T-cell (primary cell): ENCODE measurements at regions of chr17 and their contacts with region 1.

Region 1: GRCh38 chr17:53516636-53517035 is 306.1 kb upstream of the KIF2B start:
- DNase-seq: no peak
- ATAC-seq: no peak
- H3K4me3 ChIP-seq: no peak overlapping the region
- H3K4me3 Mint-ChIP-seq: no peak overlapping the region
- H3K27ac ChIP-seq: no peak overlapping the region
- H3K27ac Mint-ChIP-seq: no peak overlapping the region
- H3K4me1 ChIP-seq: no peaks in the 10 kb centered on the region
- H3K4me1 Mint-ChIP-seq: no peaks in the 10 kb centered on the region
- H3K27me3 ChIP-seq: no peaks in the 10 kb centered on the region
- H3K27me3 Mint-ChIP-seq: no peaks in the 10 kb centered on the region

Region 2: DNA sequence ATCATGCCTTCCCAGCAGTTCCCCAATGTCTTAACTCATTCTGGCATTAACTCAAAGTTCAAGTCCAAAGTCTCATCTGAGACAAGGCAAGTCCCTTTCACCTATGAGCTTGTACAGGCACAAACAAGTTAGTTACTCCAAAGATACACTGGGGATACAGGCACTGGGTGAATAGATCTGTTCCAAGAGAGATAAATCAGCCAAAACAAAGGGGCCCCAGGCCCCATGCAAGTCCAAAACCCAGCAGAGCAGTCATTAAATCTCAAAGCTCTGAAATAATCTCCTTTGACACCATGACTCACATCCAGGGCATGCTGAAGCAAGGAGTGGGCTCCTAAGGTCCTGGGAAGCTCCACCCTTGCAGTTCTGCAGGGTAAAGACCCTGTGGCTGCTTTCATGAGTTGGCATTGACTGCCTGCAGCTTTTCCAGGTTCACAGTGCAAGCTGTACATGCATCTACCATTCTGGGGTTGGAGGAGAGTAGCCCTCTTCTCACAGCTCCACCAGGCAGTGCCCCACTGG is 26.1 kb before region 1 on chr17:
- CTCF ChIA-PET with region 1: no interaction called
- POLR2A ChIA-PET with region 1: interaction called in 1 of 2 experiments, 14 read pairs
- DNase-seq: no peak
- ATAC-seq: no peak
- H3K4me3 ChIP-seq: no peak overlapping the region
- H3K4me3 Mint-ChIP-seq: no peak overlapping the region
- H3K27ac ChIP-seq: no peak overlapping the region
- H3K27ac Mint-ChIP-seq: no peak overlapping the region
- H3K4me1 ChIP-seq: no peaks in the 10 kb centered on the region
- H3K4me1 Mint-ChIP-seq: no peaks in the 10 kb centered on the region
- H3K27me3 ChIP-seq: no peaks in the 10 kb centered on the region
- H3K27me3 Mint-ChIP-seq: no peaks in the 10 kb centered on the region